ENCODE measurements at regions of chr6 and their contacts with region 1.

Region 1: GRCh38 chr6:144119376-144119775 is 24.0 kb upstream of the SF3B5 start:
- DNase-seq: no peak
- H3K4me3 ChIP-seq: no peak overlapping the region
- CTCF ChIP-seq: no peak
- POLR2A ChIP-seq: no peak

Region 2: DNA sequence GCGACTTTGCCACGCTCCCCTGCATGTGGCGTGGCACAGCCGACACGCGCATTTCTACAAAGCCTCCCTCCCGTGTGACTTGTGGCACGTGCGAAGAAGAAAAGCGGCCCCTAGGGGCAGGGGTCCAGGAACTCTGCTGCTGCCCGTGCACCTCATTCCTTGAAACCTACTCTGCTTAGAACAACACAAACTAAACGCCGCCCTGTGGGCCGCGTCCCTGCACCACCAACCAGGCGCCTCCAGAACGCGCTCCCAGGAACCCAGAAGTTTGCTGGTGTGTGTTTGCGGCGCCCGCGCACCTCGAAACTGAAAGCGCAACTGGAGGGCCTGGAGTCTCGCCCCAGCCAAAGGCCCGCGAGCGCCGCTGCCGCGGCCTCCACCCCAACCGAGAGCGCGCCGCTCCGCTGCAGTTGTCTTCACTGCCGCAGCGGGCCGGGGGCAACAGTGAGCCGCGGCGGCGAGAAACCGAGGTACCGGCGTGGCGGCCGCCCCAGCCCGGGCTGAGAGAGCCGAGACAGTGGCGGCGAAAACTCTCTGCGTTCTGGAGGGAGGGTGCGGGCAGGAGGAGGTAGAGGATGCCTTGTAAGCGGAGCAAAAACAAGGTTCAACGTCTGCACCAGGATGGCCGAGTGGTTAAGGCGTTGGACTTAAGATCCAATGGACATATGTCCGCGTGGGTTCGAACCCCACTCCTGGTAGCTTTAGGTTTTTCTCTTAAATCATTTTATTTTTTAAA is 96.7 kb after region 1 on chr6:
- intact Hi-C with region 1: loop called (anchors 10 kb)
- DNase-seq: peak; percentile 96 to 99
- H3K4me3 ChIP-seq: peak overlapping the region; percentile 34
- CTCF ChIP-seq: peak in 1 of 3 donors; percentile 47
- POLR2A ChIP-seq: no peak